ENCODE measurements at regions of chr7 and their contacts with region 1.

Region 1: GRCh38 chr7:2886900-2887299 is 42.8 kb upstream of the GNA12 start:
- DNase-seq: peak; percentile 76
- H3K4me3 Mint-ChIP-seq: no peak overlapping the region
- H3K27ac Mint-ChIP-seq: no peak overlapping the region
- H3K4me1 Mint-ChIP-seq: no peaks in the 10 kb centered on the region
- H3K27me3 Mint-ChIP-seq: no peaks in the 10 kb centered on the region
- CTCF ChIP-seq: peak; percentile 81

Region 2: DNA sequence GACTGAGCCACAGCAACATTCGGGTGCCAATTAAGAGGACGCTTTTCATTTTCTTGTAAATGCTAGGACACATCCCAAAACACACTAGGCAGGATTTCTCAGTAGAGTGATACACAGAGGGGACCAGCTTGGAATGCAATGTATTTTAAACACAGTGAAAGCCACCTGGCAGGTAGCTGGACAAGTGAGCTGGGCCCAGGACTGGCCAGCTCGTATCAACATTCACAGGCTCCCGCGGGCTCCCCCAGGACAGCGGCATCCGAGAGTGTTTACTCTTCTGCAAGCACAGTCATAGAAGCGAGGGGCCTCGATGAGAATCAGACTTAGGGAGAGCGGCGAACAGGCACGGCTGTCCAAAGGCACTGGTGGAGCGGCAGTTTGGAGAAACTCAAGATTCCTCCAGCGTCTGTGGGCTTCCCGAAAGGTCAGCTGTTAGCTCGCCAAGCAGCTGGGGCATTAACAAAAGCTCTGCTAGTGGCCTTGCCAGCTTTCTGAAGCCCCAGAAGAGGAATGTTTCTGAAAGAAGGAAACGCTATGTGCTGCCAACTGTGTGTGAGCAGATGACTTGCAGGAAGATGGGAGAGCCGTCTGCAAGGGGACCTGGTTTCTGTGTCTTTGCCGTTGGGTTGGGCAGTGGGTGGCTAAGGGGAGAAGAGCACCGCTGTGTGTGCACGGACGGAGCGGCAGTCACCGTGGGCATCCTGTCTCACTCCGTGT is 157.0 kb before region 1 on chr7:
- CTCF ChIA-PET with region 1: no interaction called
- POLR2A ChIA-PET with region 1: no interaction called
- intact Hi-C with region 1: no loop called
- DNase-seq: no peak
- H3K4me3 Mint-ChIP-seq: no peak overlapping the region
- H3K27ac Mint-ChIP-seq: no peak overlapping the region
- H3K4me1 Mint-ChIP-seq: no peaks in the 10 kb centered on the region
- H3K27me3 Mint-ChIP-seq: no peaks in the 10 kb centered on the region
- CTCF ChIP-seq: no peak

Region 3: GRCh38 chr7:2870471-2870931 is 16.4 kb before region 1 on chr7:
- CTCF ChIA-PET with region 1: no interaction called
- POLR2A ChIA-PET with region 1: no interaction called
- intact Hi-C with region 1: no loop called
- DNase-seq: peak; percentile 37
- H3K4me3 Mint-ChIP-seq: no peak overlapping the region
- H3K27ac Mint-ChIP-seq: no peak overlapping the region
- H3K4me1 Mint-ChIP-seq: peaks cover 24% of the 10 kb centered on the region
- H3K27me3 Mint-ChIP-seq: no peaks in the 10 kb centered on the region
- CTCF ChIP-seq: no peak

Region 4: GRCh38 chr7:2941216-2941859 is 54.4 kb after region 1 on chr7:
- CTCF ChIA-PET with region 1: no interaction called
- POLR2A ChIA-PET with region 1: no interaction called
- intact Hi-C with region 1: no loop called
- DNase-seq: no peak
- H3K4me3 Mint-ChIP-seq: no peak overlapping the region
- H3K27ac Mint-ChIP-seq: no peak overlapping the region
- H3K4me1 Mint-ChIP-seq: no peaks in the 10 kb centered on the region
- H3K27me3 Mint-ChIP-seq: no peaks in the 10 kb centered on the region
- CTCF ChIP-seq: no peak

Region 5: DNA sequence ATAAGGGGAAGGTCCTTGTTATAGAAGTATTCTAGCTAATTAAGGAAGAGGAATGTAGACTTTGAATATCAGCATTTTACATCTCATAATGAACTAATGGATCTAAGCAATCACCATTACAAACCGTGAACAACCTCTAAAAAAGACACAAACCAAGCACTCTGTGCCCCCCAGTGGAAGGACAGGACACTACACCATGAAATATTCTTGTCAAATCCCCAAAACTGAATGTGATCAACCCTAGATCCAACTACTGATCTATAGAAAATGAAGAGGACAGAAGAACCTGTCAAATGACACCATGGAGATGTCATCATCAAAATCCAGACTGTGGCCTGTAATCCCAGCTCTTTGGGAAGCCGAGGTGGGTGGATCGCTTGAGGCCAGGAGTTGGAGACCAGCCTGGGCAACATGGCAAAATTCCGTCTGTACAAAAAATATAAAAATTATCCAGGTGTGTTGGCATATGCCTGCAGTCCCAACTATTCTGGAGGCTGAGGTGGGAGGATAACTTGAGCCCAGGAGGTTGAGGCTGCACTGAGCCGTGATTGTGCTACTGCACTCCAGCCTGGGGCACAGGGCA is 268.1 kb after region 1 on chr7:
- CTCF ChIA-PET with region 1: interaction called, 16 read pairs
- POLR2A ChIA-PET with region 1: no interaction called
- intact Hi-C with region 1: loop called (anchors 1 kb)
- DNase-seq: peak; percentile 57
- H3K4me3 Mint-ChIP-seq: no peak overlapping the region
- H3K27ac Mint-ChIP-seq: no peak overlapping the region
- H3K4me1 Mint-ChIP-seq: peaks cover 5% of the 10 kb centered on the region
- H3K27me3 Mint-ChIP-seq: no peaks in the 10 kb centered on the region
- CTCF ChIP-seq: peak; percentile 67

Region 6: GRCh38 chr7:3200504-3200903 is 313.6 kb after region 1 on chr7:
- CTCF ChIA-PET with region 1: no interaction called
- POLR2A ChIA-PET with region 1: no interaction called
- intact Hi-C with region 1: loop called (anchors 1 kb)
- DNase-seq: peak; percentile 71
- H3K4me3 Mint-ChIP-seq: no peak overlapping the region
- H3K27ac Mint-ChIP-seq: no peak overlapping the region
- H3K4me1 Mint-ChIP-seq: peaks cover 8% of the 10 kb centered on the region
- H3K27me3 Mint-ChIP-seq: peaks cover 19% of the 10 kb centered on the region
- CTCF ChIP-seq: peak; percentile 50

Region 7: GRCh38 chr7:3300651-3301378 is 413.9 kb after region 1 on chr7 and contains the start of gene SDK1:
- CTCF ChIA-PET with region 1: interaction called, 3 read pairs
- POLR2A ChIA-PET with region 1: no interaction called
- intact Hi-C with region 1: loop called (anchors 2 kb)
- DNase-seq: peak; percentile 67
- H3K4me3 Mint-ChIP-seq: peak within 1 kb of the TSS; percentile 53
- H3K27ac Mint-ChIP-seq: no peak within 1 kb of the TSS
- H3K4me1 Mint-ChIP-seq: no peaks in the 10 kb centered on the region
- H3K27me3 Mint-ChIP-seq: peaks cover 9% of the 10 kb centered on the region
- CTCF ChIP-seq: peak; percentile 83
- total RNA-seq, gene SDK1: 1.5 and 3.3 TPM in 2 replicates

Region 8: GRCh38 chr7:3533040-3533439 is 646.1 kb after region 1 on chr7:
- CTCF ChIA-PET with region 1: no interaction called
- POLR2A ChIA-PET with region 1: no interaction called
- intact Hi-C with region 1: no loop called
- DNase-seq: no peak
- H3K4me3 Mint-ChIP-seq: no peak overlapping the region
- H3K27ac Mint-ChIP-seq: no peak overlapping the region
- H3K4me1 Mint-ChIP-seq: no peaks in the 10 kb centered on the region
- H3K27me3 Mint-ChIP-seq: no peaks in the 10 kb centered on the region
- CTCF ChIP-seq: no peak

Measured in MCF 10A (cell line).